HEK293 (cell line): ENCODE measurements at regions of chr17 and their contacts with region 1.

Region 1: GRCh38 chr17:74748529-74749365 is at the start of gene NHERF1:
- H3K4me3 ChIP-seq: peak within 1 kb of the TSS; percentile 81
- H3K27ac ChIP-seq: peak within 1 kb of the TSS; percentile 68; the same call in 1 of the 2 replicates
- H3K4me1 ChIP-seq: peaks cover 7% of the 10 kb centered on the region
- CTCF ChIP-seq: peak; percentile 100

Region 2: DNA sequence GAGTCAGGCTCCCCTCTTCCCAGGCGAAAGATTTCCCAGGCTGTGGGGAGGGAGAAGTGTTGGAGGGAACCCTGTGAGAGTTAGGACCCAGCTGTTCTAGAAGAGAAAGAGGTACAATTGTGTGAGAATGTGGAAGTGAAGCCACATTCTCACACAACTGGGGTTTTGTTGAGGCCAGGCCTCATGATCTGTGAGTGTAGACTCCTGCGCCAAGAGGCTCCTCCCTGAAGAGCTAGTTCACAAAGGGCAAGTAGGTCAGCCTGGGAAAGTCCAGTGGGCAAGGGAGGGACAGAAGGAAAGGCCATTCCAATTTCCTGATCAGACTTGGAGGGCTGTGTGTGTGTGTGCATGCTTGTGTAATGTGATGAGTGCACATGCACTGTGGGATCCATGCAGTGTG is 51.2 kb before region 1 on chr17:
- CTCF ChIA-PET with region 1: no interaction called
- POLR2A ChIA-PET with region 1: no interaction called
- H3K4me3 ChIP-seq: no peak overlapping the region
- H3K27ac ChIP-seq: no peak overlapping the region
- H3K4me1 ChIP-seq: no peaks in the 10 kb centered on the region
- CTCF ChIP-seq: no peak

Region 3: DNA sequence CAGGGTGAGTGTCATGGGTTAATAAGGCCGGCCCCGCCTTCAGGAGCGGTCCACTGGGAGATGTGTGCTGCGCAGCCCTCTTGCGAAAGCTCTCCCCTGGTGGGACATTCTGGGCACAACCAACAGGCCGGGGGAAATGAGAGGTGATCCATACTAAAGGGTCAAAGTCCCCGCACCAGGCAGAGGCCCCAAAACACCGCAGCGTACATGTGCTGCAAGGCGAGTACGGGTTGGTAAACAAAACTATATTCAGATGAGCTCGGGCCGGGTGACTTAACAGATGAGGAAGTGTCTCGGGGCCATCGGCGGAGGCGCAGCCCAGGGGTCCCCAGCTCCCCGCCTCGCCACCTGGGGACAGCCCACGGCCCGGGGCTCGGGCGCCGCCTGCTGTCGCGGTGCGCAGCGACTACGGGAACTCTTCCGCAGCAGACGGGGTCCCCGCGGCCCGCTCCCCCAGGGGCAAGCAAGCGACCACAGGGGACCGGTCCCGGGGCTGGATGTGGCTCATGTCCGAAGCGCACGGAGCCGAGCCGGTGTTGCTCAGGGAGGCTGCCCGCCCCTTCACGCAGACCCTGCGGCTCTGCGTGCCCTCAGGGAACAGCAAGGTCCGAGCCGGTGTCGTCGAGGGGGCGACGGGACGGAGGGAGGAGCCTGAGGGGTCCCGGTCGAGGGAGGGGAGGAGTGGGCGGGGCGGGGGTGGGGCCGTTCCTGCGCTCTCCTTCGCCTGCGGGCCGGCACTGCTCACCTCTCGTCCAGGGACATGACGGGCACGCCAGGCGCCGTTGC is 12.0 kb before region 1 on chr17 and contains the start of gene RAB37:
- CTCF ChIA-PET with region 1: interaction called, 29 read pairs
- POLR2A ChIA-PET with region 1: no interaction called
- H3K4me3 ChIP-seq: peak within 1 kb of the TSS; percentile 5; the same call in 1 of the 2 replicates
- H3K27ac ChIP-seq: no peak within 1 kb of the TSS
- H3K4me1 ChIP-seq: peaks cover 2% of the 10 kb centered on the region; the same call in 1 of the 2 replicates
- CTCF ChIP-seq: no peak

Region 4: GRCh38 chr17:74759243-74759801 is 10.6 kb after region 1 on chr17:
- CTCF ChIA-PET with region 1: interaction called, 38 read pairs
- POLR2A ChIA-PET with region 1: interaction called, 22 read pairs
- H3K4me3 ChIP-seq: no peak overlapping the region
- H3K27ac ChIP-seq: no peak overlapping the region
- H3K4me1 ChIP-seq: peaks cover 14% of the 10 kb centered on the region
- CTCF ChIP-seq: no peak

Region 5: DNA sequence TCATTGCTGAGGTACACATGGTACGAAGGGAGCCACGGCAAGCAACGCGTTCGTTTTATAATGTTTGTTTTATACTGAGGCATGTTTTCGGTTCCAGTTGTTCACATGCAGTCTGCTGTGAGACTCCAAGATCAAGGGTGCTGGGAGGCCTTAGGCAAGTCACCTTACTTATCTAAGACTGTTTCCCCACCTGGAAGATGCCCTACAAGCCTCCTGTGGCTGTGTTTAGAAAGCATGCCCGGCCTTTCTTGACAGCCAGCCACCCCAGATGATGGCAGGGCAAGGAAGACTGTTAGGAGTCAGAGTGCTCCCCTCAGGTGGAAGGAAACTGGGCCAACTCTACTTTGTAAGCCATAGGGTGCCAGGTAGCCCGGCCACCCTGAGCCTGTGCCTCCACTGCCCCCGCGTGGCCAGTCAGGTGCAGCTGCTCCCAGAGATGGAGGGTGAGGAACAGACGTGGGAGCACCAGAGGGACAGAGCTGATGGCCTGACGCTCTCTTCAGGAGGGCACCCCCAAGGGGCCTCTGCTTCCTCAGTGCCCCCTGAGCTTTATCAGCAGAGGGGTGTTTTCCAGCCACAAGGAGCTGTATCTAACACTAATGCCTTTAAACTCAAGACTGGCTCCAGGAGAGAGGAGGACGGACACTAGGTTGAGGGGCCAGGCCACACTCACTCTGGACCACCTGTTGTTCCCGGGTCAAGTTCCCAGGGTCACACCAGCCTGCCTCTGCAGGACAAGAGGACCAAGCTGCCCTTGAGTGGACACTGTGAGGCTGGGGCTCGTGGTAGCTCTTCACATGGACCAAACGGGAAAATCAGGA is 22.0 kb after region 1 on chr17:
- CTCF ChIA-PET with region 1: interaction called, 84 read pairs
- POLR2A ChIA-PET with region 1: interaction called, 17 read pairs
- H3K4me3 ChIP-seq: no peak overlapping the region
- H3K27ac ChIP-seq: no peak overlapping the region
- H3K4me1 ChIP-seq: no peaks in the 10 kb centered on the region
- CTCF ChIP-seq: peak; percentile 88

Region 6: DNA sequence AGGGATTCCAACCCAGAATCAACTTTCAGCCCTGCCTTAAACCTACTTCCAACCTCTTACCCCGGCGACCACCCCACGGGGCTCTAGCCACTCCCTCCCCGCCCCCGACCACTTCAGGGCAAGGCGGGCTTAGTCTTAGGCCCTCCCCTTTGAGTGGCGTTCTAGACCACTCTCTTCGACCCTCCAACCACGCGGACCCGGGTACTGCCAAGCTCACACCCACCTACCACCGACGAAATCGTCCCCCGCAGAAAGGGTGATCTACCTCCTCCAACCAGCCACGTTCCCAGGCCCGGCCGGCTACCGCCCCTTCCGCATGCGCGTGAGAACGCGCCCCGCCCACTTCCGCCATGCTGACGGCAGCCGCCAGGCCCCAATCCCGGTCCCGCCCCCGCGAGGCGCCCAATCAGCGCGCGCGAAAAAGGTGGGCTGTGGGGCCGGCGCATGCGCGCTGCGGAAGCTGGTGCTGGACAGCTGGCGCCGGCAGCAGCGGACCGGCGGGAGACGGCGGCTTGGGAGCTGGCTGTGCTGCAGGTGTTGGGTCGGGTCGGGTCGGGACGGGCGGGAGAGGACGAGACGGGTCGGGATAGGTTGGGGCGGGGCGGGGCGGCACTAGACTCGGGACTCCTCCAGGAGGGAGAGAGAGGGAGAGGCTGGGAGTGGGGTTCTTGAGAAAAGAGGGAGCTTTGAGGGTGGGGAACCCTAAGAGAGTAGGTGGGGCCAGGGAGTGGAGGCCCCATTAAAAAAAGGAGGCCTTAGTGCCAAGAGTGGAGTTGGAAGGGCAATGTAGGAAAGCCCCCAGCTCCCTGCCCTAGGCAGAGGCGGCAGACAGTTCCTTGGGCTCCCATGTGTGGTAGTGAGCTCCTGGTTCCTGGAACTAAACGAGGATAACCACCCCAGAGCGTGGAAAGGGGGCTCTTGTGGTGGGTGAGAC is 27.6 kb after region 1 on chr17 and contains the start of gene NAT9:
- CTCF ChIA-PET with region 1: interaction called, 84 read pairs
- POLR2A ChIA-PET with region 1: interaction called, 17 read pairs
- H3K4me3 ChIP-seq: peak within 1 kb of the TSS; percentile 84
- H3K27ac ChIP-seq: peak within 1 kb of the TSS; percentile 50
- H3K4me1 ChIP-seq: peaks cover 3% of the 10 kb centered on the region; the same call in 1 of the 2 replicates
- CTCF ChIP-seq: no peak